K562 (cell line): ENCODE measurements at regions of chr6 and their contacts with region 1.

Region 1: GRCh38 chr6:3068329-3069214 is at the start of gene RIPK1:
- DNase-seq: peak; percentile 96 to 98 (median 96)
- ATAC-seq: peak; percentile 85
- H3K4me3 ChIP-seq: peak within 1 kb of the TSS; percentile 84
- H3K27ac ChIP-seq: peak within 1 kb of the TSS; percentile 97
- H3K4me1 ChIP-seq: peaks cover 19 to 30% of the 10 kb centered on the region in 2 experiments
- H3K27me3 ChIP-seq: no peaks in the 10 kb centered on the region
- CTCF ChIP-seq: peak; percentile 57 to 68 (median 59); a peak in 5 of 6 replicates
- EP300 ChIP-seq: peak; percentile 51
- POLR2A ChIP-seq: peak; percentile 95
- RAD21 ChIP-seq: peak in 1 of 2 experiments; percentile 34; a peak in 3 of 4 replicates
- polyA plus RNA-seq, gene RIPK1: 3.8 to 4.5 TPM

Region 2: GRCh38 chr6:3118353-3119039 is 49.9 kb after region 1 on chr6 and contains the start of gene BPHL:
- CTCF ChIA-PET with region 1: no interaction called
- POLR2A ChIA-PET with region 1: interaction called, 5 read pairs
- in situ Hi-C with region 1: no loop called
- intact Hi-C with region 1: loop called (anchors 2 kb)
- DNase-seq: peak; percentile 97 to 100 (median 100)
- ATAC-seq: peak; percentile 95
- H3K4me3 ChIP-seq: peak within 1 kb of the TSS; percentile 76
- H3K27ac ChIP-seq: peak within 1 kb of the TSS; percentile 86
- H3K4me1 ChIP-seq: peaks cover 8 to 15% of the 10 kb centered on the region in 2 experiments; a peak in 4 of 5 replicates
- H3K27me3 ChIP-seq: no peaks in the 10 kb centered on the region
- CTCF ChIP-seq: no peak
- EP300 ChIP-seq: no peak
- POLR2A ChIP-seq: peak; percentile 94
- RAD21 ChIP-seq: 0 out of 4 replicates have a peak, but pooled peaks of 1 of the 2 experiments have one; percentile 18
- polyA plus RNA-seq, gene BPHL: 3.5 to 9.3 TPM